PC-3 (cell line): ENCODE measurements at regions of chr1 and their contacts with region 1.

Region 1: DNA sequence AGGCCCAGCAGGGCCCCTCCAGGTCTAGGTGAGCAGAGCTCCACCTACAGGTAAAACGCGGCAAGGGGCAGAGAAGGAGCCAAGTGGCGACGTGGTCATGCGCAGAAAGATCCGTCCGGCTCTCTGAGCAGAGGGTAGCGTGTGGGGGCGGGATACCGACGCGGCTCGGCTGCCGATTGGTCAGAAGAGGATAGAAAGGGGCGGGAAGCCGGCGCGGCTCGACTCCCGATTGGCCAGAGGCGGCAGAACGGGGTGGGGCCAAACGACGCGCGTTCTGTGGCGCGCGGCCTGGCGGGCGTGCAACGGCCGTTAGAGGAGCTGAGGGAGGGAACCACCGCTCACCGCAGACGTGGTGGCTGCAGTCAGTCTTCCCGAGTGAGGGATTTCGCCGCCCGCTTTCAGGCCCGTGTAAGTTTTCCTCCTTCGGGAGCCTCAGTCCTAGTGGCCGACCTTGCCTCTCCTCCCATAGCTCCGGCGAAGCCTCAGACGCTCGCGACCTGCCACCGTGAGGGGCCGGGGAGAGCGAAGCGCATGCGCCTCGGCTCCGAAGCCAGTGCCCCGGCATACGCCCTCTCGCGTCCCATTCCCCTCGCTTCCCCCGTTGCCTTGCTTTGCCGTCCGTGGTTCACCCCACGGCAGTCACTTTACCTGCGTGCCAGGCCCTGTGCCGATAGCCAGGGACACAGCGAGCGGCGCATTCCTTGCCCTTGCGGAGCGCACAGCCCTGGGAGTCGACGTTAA is at the start of gene CEP85:
- DNase-seq: peak; percentile 99
- ATAC-seq: peak; percentile 93
- H3K4me3 ChIP-seq: peak within 1 kb of the TSS; percentile 96
- H3K27ac ChIP-seq: peak within 1 kb of the TSS; percentile 48
- H3K4me1 ChIP-seq: peaks cover 25% of the 10 kb centered on the region
- H3K27me3 ChIP-seq: no peaks in the 10 kb centered on the region
- CTCF ChIP-seq: peak; percentile 85
- total RNA-seq, gene CEP85: 30.6 and 30.8 TPM in 2 replicates

Region 2: DNA sequence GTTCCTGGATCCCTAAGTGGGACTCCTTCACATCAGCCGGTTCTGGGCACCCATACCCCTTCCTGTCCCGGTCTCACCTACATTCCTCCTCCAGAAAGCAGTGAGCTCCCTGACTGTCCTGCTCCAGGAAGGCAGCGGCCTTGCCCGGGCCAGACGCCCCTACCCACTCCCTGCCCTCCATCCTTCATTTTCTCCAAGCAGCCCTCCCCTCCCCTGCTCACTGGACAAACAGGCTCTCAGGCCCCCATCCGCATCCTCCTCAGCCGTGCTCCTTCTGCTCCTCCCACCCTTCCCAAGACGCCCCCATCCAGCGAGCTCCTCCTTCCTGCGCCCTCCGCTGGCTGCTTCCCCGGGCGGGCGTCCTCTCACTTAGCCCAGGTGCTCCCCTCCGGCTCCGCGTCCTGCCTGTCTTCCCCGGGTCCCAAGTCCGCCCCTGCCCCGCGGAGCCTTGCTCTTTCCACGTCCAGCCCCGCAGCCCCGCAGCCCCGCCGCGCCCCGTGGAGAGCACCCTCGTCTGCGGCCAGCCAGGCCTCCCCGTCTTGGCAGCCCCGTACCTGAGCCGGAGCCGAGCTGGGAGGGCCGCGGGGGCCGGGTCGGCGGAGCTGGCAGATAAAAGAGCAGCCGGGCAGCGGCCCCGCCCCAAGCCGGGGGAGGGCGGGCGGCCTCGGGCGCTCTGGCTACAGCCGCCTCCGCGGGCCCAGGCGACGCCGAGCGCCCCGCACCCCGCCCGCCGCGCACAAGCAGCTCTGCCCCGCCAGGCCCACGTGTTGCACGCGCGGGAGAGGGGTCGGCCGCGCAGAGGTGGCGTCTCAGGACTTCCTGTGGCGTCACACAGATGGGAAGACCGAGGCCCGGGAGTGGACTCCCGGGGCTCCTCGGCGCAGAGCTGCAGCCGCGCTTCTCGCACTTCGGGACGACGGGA is 358.9 kb before region 1 on chr1 and contains the start of gene PAQR7:
- CTCF ChIA-PET with region 1: no interaction called
- POLR2A ChIA-PET with region 1: interaction called, 17 read pairs
- intact Hi-C with region 1: no loop called
- DNase-seq: peak; percentile 64
- ATAC-seq: peak; percentile 80
- H3K4me3 ChIP-seq: peak within 1 kb of the TSS; percentile 90
- H3K27ac ChIP-seq: no peak within 1 kb of the TSS
- H3K4me1 ChIP-seq: peaks cover 6% of the 10 kb centered on the region; the same call in 1 of the 2 replicates
- H3K27me3 ChIP-seq: no peaks in the 10 kb centered on the region
- CTCF ChIP-seq: no peak
- total RNA-seq, gene PAQR7: 6.4 and 7.2 TPM in 2 replicates

Region 3: GRCh38 chr1:26126321-26127084 is 107.6 kb before region 1 on chr1:
- CTCF ChIA-PET with region 1: interaction called, 24 read pairs
- POLR2A ChIA-PET with region 1: no interaction called
- intact Hi-C with region 1: no loop called
- DNase-seq: peak; percentile 92
- ATAC-seq: peak; percentile 72
- H3K4me3 ChIP-seq: peak overlapping the region; percentile 31
- H3K27ac ChIP-seq: peak overlapping the region; percentile 94
- H3K4me1 ChIP-seq: peaks cover 63% of the 10 kb centered on the region
- H3K27me3 ChIP-seq: no peaks in the 10 kb centered on the region
- CTCF ChIP-seq: no peak

Region 4: DNA sequence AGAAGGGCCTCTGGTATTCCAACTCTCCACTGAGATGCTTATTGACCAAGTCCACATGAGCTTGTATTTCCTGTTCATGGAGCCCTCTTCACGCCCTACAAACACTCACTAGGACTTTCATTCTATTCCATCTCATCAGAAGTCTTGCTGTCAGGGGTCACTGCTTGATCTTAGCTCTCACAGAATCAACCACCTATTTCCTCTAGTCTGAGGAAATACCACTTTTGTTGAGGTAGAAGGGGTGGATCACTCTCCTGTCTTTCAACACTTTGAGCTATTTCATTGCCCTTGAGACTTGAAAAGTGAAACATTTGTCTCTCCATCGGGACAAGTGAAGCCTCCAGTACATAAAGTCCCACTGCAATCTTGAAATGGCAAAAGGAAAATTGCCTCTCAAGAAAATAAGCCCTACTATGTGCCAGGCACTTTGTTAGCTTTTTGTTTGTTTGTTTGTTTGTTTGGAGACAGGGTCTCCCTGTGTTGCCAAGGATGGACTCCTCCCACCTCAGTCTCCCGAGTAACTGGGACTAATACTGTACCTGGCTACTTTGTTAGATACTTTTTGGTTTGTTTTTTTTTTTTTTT is 95.0 kb before region 1 on chr1:
- CTCF ChIA-PET with region 1: no interaction called
- POLR2A ChIA-PET with region 1: no interaction called
- intact Hi-C with region 1: no loop called
- DNase-seq: no peak
- ATAC-seq: no peak
- H3K4me3 ChIP-seq: no peak overlapping the region
- H3K27ac ChIP-seq: no peak overlapping the region
- H3K4me1 ChIP-seq: no peaks in the 10 kb centered on the region
- H3K27me3 ChIP-seq: no peaks in the 10 kb centered on the region
- CTCF ChIP-seq: no peak

Region 5: GRCh38 chr1:26162220-26162917 is 71.7 kb before region 1 on chr1:
- CTCF ChIA-PET with region 1: no interaction called
- POLR2A ChIA-PET with region 1: no interaction called
- intact Hi-C with region 1: no loop called
- DNase-seq: peak; percentile 13
- ATAC-seq: no peak
- H3K4me3 ChIP-seq: peak overlapping the region; percentile 74
- H3K27ac ChIP-seq: no peak overlapping the region
- H3K4me1 ChIP-seq: 0 out of 2 replicates have a peak, but pooled peaks cover 4% of the 10 kb centered on the region
- H3K27me3 ChIP-seq: no peaks in the 10 kb centered on the region
- CTCF ChIP-seq: no peak

Region 6: DNA sequence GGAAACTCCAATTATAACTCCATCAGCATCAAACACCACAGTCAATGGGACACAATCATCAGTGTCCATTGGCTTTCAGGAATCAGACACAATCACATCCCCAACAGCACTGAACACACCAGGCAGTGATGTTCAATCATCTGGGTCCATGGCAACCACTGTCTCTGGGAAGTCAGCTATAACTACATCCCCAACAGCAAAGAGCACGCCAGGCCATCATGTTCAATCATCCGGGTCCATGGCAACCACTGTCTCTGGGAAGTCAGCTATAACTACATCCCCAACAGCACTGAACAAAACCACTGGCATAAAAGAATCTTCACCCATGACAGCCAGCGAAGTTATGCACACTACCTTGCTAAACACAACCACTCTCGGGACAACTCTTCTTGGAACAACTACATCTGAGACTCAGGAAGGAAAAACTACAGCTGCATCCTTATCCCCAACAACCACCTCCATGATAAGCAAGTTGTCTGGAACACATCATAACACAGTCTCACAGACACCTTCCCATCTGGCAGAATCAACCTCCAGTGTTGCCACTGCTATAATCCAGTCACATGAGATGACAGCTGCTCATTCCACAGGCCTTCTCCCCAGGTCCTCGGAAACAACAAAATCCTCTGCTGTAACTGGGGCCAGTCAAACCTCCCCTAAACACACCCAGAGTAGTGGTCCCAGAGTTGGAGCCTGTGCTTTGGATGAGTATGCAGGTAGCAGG is 23.8 kb before region 1 on chr1:
- CTCF ChIA-PET with region 1: interaction called, 14 read pairs
- POLR2A ChIA-PET with region 1: no interaction called
- intact Hi-C with region 1: no loop called
- DNase-seq: no peak
- ATAC-seq: no peak
- H3K4me3 ChIP-seq: no peak overlapping the region
- H3K27ac ChIP-seq: no peak overlapping the region
- H3K4me1 ChIP-seq: no peaks in the 10 kb centered on the region
- H3K27me3 ChIP-seq: no peaks in the 10 kb centered on the region
- CTCF ChIP-seq: no peak

Region 7: DNA sequence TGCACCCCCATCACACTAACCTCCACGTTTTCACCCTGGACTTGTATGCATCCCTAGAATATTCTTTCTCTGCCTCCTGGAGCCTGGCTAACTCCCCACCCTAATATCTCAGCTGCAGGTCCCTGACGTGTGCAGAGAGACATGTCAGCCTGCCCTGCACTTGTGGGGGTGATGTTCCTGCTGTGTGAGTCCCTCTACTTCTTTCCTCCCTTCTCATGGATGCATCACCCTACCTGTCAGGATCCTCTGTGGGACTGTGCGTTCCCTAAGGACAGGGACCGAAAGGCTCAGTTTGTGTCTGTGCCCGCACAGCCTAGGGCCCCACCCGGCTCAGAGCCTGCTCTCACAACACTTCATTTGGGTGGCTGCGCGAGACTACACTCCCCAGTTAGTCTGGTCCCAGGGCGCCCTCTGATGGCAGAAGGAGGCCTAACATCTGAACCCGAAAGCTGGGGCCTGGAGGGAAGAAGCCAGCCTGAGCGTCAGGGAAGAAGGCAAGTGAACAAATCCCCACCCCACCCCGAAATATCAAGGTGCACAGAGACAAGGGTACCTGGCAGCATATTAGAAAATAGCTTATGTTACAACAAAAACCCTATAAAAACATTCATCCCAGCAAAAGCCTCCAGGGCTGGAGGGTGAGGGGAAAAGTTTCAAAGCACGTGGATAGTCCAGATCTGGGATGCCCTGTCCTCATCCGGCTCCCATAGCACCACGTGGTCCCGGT is 87.4 kb after region 1 on chr1:
- CTCF ChIA-PET with region 1: interaction called, 3 read pairs
- POLR2A ChIA-PET with region 1: no interaction called
- intact Hi-C with region 1: loop called (anchors 5 kb)
- DNase-seq: peak; percentile 92
- ATAC-seq: peak; percentile 98
- H3K4me3 ChIP-seq: no peak overlapping the region
- H3K27ac ChIP-seq: no peak overlapping the region
- H3K4me1 ChIP-seq: no peaks in the 10 kb centered on the region
- H3K27me3 ChIP-seq: no peaks in the 10 kb centered on the region
- CTCF ChIP-seq: peak; percentile 88

Region 8: DNA sequence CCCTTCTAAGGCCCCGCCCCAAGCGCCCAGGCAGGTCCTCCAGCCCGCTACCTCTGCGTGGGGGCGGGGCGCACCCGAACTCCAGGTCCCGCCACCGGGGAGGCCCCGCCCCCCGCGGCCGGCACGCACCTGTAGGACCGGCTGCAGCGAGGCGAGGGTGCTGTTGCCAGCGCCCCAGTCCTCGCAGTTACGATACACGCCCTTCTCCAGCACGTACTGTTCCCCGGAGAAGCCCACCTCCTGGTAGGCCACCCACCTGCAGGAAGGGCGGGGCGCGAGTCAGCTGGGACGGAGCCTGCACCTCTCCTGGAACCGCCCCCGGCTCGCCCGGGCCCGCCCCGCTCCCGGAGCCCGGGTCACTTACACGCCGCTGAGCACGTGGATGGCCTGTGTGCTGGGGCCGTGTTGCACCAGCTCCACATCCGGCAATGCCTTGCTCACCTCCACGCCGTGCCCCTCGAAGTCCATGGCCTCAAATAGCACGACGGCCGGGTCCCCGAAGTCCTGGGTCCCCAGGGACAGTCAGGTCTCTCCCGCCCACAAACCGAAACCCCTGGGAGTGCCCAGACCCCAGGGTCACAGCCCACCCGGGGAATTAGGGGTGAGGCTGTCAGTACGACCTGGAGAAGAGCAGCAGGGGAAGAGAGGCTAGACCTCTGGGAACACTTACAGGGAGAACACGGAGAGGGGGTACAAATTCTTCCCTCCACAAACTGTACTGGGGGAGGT is 102.6 kb after region 1 on chr1:
- CTCF ChIA-PET with region 1: no interaction called
- POLR2A ChIA-PET with region 1: no interaction called
- intact Hi-C with region 1: no loop called
- DNase-seq: peak; percentile 86
- ATAC-seq: peak; percentile 92
- H3K4me3 ChIP-seq: peak overlapping the region; percentile 89
- H3K27ac ChIP-seq: peak overlapping the region; percentile 20; the same call in 1 of the 2 replicates
- H3K4me1 ChIP-seq: peaks cover 5% of the 10 kb centered on the region
- H3K27me3 ChIP-seq: no peaks in the 10 kb centered on the region
- CTCF ChIP-seq: no peak